ENCODE measurements at regions of chr5 and their contacts with region 1.

Region 1: GRCh38 chr5:177454397-177455035 is 7.9 kb downstream of the PRR7 start:
- DNase-seq: peak; percentile 95
- ATAC-seq: peak; percentile 68

Region 2: DNA sequence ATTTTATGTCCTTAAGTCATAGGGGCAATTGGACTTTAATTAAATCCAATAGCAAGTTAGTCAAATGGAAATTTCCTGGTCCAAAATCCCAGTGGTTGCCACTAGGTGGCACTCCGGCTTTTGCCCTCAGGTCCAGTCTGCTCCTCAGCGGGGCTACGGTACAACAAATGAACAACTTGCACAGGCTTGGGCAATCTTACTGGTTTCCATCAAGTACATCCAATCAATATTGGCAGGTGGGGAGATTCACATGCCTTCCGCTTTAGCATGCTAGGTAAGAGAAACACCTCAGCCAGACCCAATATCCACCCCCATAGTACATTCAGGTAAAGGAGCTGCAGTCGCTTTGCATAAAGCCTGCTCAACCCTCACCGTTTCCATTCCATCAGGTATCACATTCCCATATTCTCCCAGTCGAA is 136.5 kb before region 1 on chr5:
- intact Hi-C with region 1: loop called (anchors 5 kb)
- DNase-seq: peak; percentile 74
- ATAC-seq: no peak

Region 3: GRCh38 chr5:177390363-177391300 is 63.9 kb before region 1 on chr5:
- intact Hi-C with region 1: loop called (anchors 1 kb)
- DNase-seq: peak; percentile 79
- ATAC-seq: peak; percentile 83

Region 4: DNA sequence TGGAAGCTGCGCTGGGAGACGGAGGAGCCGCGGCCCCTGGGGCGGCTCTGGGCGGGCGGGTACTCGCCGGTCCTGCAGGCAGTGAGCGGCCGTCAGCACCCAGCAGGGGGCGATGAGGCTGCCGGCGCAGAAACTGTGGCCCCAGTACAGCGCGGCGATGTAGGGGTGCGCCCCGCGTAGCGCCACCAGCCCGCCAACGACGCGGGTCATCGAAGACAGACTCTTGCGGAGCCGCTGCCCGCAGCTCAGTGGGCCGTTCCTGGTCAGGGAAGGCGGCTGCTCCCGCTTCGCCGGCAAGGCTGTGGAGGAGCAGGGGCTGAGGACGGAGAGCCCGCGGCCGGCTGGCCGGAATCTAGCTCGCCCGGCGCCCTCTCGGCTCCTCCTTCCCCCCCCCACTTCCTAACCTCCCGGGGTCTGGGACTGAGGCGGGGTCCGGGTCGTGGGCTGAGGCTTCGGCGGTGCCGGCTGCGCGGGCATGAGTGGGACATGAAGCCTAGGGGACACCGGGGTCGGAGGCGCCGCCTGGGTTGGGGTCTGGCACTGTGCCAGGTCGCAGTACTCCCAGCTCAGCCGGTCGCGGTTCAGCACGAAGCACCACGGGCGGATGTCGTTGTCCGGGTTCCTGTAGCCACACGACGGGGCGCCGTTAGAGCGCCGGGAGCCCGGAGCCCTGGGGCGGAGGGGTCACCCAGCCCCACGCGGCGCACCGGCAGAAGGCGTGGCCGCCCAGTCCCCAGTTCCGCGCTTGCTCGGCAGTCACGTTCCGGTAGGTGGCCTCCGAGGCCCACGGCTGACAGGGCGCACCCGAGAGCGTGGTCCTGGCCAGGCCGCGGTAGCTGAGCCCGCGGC is 50.5 kb before region 1 on chr5:
- intact Hi-C with region 1: loop called (anchors 1 kb)
- DNase-seq: peak; percentile 94
- ATAC-seq: peak; percentile 93

Region 5: DNA sequence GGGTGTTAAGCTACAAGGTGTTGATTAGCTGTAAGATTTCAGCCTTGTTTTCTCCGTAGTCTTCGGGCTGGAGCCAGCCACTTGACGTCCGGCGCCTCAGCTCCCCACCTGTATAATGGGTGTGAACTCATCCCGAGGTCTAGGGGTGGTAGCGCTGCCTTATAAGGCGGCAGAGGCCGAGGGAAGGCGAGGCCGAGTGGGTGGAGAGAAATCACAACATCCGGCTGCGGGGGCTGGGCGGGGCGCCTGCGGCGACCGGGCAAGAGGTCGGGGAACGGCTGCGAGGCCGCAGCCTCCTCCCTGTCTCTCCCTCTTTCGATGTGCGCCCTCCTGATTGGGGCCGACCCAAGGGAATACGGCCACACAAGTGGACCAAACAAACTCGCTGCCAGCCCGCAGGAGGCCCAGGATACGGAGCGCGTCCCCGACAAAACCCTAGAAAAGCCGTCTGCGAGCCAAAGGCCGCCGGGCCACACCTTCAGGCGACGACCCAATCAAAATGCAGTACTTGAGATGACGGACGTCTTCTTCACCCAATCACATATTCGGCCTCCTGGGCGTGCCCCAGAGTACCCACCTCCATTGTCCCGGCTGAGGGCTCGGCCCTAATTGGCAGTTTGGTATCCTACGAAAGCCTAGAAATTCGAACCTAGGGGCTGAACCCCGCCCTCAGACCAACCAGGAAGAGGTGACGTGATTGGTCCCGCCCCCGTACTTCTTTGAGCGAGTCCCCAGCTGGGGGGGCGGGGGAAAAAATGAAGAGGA is 28.5 kb before region 1 on chr5:
- intact Hi-C with region 1: loop called (anchors 2 kb)
- DNase-seq: peak; percentile 100
- ATAC-seq: peak; percentile 98

Region 6: GRCh38 chr5:177471610-177472356 is 17.3 kb after region 1 on chr5:
- intact Hi-C with region 1: loop called (anchors 2 kb)
- DNase-seq: peak; percentile 84
- ATAC-seq: peak; percentile 62

Region 7: GRCh38 chr5:177497292-177498033 is 42.9 kb after region 1 on chr5 and contains the start of gene PDLIM7:
- intact Hi-C with region 1: loop called (anchors 1 kb)
- DNase-seq: peak; percentile 98
- ATAC-seq: peak; percentile 90
- total RNA-seq, gene PDLIM7: 43.1 TPM